ENCODE measurements at regions of chr10 and their contacts with region 1.

Region 1: GRCh38 chr10:92757066-92757710 is 67.4 kb downstream of the HHEX start:
- DNase-seq: peak; percentile 95
- H3K4me3 ChIP-seq: peak overlapping the region; percentile 58
- H3K27ac ChIP-seq: peak overlapping the region; percentile 96
- H3K4me1 ChIP-seq: peaks cover 68% of the 10 kb centered on the region
- CTCF ChIP-seq: peak; percentile 73

Region 2: DNA sequence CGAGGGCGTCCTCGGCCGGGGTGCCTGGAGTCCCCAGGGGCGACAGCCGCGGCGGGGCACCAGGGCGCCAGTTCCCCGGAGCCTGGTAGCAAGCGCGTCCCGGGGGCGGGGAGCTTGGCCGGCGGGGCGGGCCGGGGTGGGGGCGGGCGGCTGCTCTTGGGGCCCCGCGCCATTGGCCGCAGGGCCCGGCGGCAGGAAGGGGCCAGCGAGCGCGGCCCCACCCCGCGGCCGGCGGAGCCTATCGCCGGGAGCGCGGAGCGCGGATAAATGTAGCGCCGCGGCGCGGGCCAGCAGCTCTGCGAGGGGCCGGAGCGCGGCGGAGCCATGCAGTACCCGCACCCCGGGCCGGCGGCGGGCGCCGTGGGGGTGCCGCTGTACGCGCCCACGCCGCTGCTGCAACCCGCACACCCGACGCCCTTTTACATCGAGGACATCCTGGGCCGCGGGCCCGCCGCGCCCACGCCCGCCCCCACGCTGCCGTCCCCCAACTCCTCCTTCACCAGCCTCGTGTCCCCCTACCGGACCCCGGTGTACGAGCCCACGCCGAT is 67.5 kb before region 1 on chr10 and contains the start of gene HHEX:
- CTCF ChIA-PET with region 1: no interaction called
- POLR2A ChIA-PET with region 1: interaction called, 3 read pairs
- intact Hi-C with region 1: loop called (anchors 2 kb)
- DNase-seq: peak; percentile 74
- H3K4me3 ChIP-seq: peak within 1 kb of the TSS; percentile 62
- H3K27ac ChIP-seq: no peak within 1 kb of the TSS
- H3K4me1 ChIP-seq: peaks cover 33% of the 10 kb centered on the region
- CTCF ChIP-seq: no peak
- total RNA-seq, gene HHEX: 2.1 and 2.8 TPM in 2 replicates

Region 3: DNA sequence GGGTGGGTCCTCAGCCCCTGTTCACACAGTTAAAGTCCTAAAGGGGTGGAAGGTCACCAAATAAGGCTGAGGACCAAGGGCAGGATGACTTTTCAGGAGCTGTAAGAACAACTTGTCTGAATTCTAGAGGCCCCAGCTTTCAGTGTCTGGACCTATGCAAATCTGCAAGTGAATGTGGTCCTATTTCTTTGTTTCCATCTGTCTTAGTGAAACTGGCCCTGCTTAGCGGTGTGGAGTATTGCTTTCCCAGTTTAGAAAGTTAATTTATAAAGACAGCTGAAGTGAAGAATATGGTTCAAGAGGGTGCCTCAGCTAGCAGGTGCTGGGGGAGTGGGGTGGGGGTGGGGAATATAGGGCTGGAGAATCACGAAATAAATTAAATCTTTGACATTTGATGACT is 27.3 kb before region 1 on chr10:
- CTCF ChIA-PET with region 1: no interaction called
- POLR2A ChIA-PET with region 1: interaction called, 7 read pairs
- intact Hi-C with region 1: loop called (anchors 1 kb)
- DNase-seq: peak; percentile 90
- H3K4me3 ChIP-seq: peak overlapping the region; percentile 30
- H3K27ac ChIP-seq: peak overlapping the region; percentile 79
- H3K4me1 ChIP-seq: peaks cover 76% of the 10 kb centered on the region
- CTCF ChIP-seq: no peak

Region 4: GRCh38 chr10:92773776-92774175 is 16.6 kb after region 1 on chr10:
- CTCF ChIA-PET with region 1: interaction called, 8 read pairs
- POLR2A ChIA-PET with region 1: interaction called, 11 read pairs
- intact Hi-C with region 1: no loop called
- DNase-seq: no peak
- H3K4me3 ChIP-seq: no peak overlapping the region
- H3K27ac ChIP-seq: no peak overlapping the region
- H3K4me1 ChIP-seq: no peaks in the 10 kb centered on the region
- CTCF ChIP-seq: no peak

Region 5: DNA sequence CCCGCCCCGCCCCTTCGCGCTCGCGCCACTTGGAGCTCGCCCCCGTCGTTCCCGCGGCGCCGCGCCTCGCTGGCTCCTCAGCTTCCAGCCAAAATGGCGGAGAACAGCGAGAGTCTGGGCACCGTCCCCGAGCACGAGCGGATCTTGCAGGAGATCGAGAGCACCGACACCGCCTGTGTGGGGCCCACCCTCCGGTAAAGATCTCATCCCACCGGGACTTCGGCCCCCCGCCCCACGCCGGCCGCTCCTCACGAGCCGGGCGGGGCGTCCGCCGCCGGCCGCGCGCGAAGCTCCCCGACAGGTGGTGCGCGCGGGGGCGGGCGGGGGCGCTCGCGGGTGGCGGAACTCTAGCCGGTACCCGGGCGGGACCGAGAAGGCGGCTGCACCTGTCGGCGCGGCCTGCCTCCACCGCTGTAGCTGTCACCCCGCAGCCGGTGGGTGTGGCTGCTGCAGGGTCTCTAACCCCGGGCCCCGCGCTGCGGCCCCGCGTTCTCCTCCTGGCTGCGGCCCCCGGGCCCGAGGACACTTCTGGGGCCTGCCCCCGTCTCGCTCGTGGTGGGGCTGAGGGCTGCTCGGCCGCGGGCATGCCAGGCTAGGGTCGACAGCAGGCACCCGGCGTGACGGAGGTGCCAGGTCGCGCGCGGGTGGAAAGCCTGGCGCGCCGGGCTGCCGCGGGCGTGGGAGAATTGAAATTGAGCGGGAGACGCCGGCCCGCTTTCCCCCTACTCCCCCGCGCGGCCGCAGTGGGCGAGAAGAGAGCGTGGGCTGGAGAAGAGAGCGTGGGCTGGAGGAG is 91.4 kb after region 1 on chr10 and contains the start of gene EXOC6:
- CTCF ChIA-PET with region 1: interaction called, 5 read pairs
- POLR2A ChIA-PET with region 1: interaction called, 5 read pairs
- intact Hi-C with region 1: loop called (anchors 2 kb)
- DNase-seq: peak; percentile 93
- H3K4me3 ChIP-seq: peak within 1 kb of the TSS; percentile 83
- H3K27ac ChIP-seq: peak within 1 kb of the TSS; percentile 56
- H3K4me1 ChIP-seq: peaks cover 18% of the 10 kb centered on the region
- CTCF ChIP-seq: 0 out of 2 replicates have a peak, but pooled peaks have one; percentile 32
- total RNA-seq, gene EXOC6: 8.0 and 9.6 TPM in 2 replicates